A549 (cell line): ENCODE measurements at regions of chr1 and their contacts with region 1.

Region 1: DNA sequence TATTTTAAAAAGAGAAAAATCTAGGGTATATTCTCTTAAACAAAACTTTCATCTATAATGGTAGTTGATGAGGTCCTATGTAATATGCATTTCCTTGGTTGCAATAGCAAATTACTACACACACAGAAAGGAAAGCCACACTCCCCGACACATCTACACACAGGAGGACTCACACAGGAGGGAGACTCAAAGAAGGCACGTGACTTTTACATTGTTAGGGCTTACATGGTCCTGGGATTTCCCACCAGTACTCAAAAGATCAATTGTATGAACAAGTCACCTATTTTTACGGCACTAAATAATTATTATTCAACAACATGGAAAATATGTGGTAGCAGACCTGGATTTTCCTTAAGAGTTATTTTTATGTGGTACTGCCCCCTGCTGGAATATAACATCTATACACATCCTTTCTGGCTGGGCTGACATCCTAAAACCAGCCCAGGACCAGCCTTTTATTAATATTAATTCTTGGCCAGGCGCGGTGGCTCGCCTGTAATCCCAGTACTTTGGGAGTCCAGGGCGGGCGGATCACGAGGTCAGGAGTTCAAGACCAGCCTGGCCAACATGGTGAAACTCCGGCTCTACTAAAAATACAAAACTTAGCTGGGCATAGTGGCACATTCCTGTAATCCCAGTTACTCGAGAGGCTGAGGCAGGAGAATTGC is 33.9 kb upstream of the LGALS8 start:
- DNase-seq: peak; percentile 76 to 80
- ATAC-seq: peak; percentile 86 to 89
- H3K4me3 ChIP-seq: no peak overlapping the region
- H3K27ac ChIP-seq: no peak overlapping the region
- H3K4me1 ChIP-seq: 0 out of 3 replicates have a peak, but pooled peaks cover 4% of the 10 kb centered on the region
- CTCF ChIP-seq: peak; percentile 76
- EP300 ChIP-seq: no peak
- POLR2A ChIP-seq: no peak
- RAD21 ChIP-seq: peak; percentile 82 to 88

Region 2: DNA sequence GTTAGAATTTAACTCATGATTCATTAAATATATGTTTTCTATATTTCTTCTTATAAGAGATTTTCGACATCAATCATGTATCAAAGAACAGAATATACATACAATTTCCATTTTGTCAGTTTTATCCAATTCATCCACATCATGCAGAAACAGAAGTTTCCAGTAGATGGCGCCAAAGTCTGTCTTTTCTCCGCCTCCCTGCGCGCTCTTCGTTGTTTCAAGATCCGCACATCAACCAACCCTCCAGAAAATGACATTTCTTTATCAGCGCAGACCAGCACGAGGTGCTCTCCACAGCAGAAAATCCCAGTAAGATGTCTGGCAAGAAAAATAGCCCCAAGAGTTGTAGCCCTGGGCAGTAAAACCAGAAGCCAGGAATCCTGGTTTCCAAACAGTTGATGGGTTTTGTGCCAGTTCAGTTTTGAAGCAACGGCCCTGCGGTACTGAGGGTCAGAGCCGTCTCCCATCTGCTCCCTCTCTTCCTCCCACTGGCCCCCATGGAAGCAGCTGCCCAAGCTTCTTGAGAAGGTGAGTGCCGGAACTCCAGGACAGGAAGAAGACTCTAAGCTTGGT is 386.1 kb before region 1 on chr1:
- CTCF ChIA-PET with region 1: interaction called, 110 read pairs
- POLR2A ChIA-PET with region 1: no interaction called
- DNase-seq: peak; percentile 58 to 85
- ATAC-seq: peak; percentile 50 to 78; a peak in 5 of 6 replicates
- H3K4me3 ChIP-seq: no peak overlapping the region
- H3K27ac ChIP-seq: no peak overlapping the region
- H3K4me1 ChIP-seq: no peaks in the 10 kb centered on the region
- CTCF ChIP-seq: peak; percentile 95
- EP300 ChIP-seq: no peak
- POLR2A ChIP-seq: no peak
- RAD21 ChIP-seq: peak; percentile 94 to 96

Region 3: DNA sequence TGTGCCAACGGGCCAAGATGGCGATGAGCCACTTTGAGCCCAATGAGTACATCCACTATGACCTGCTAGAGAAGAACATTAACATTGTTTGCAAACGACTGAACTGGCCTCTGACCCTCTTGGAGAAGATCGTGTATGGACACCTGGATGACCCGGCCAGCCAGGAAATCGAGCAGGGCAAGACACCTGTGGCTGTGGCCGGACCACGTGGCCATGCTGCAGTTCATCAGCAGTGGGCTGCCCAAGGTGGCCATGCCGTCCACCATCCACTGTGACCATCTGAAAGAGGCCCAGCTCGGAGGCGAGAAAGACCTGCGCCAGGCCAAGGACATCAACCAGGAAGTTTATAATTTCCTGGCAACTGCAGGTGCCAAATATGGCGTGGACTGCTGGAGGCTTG is 379.7 kb before region 1 on chr1:
- CTCF ChIA-PET with region 1: interaction called, 110 read pairs
- POLR2A ChIA-PET with region 1: no interaction called
- DNase-seq: no peak
- ATAC-seq: no peak
- H3K4me3 ChIP-seq: no peak overlapping the region
- H3K27ac ChIP-seq: no peak overlapping the region
- H3K4me1 ChIP-seq: no peaks in the 10 kb centered on the region
- CTCF ChIP-seq: no peak
- EP300 ChIP-seq: no peak
- POLR2A ChIP-seq: no peak
- RAD21 ChIP-seq: no peak

Region 4: DNA sequence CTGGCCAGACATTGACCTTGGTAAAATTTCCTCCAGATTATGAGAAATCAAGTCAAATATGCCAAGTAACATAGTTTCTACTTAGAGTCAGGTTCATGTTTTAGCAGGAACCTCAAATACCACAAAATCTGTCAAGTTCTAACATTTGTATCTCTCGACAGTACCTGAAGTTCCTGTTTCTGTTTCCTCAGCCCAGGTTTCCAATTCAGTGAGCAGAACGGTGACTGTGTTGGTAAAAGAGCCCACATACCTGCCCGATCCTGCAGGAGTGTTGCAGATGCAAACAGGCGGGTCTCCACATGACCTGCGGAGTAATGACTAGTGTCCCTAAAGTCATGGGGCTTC is 23.9 kb before region 1 on chr1:
- CTCF ChIA-PET with region 1: no interaction called
- POLR2A ChIA-PET with region 1: no interaction called
- DNase-seq: no peak
- ATAC-seq: no peak
- H3K4me3 ChIP-seq: no peak overlapping the region
- H3K27ac ChIP-seq: no peak overlapping the region
- H3K4me1 ChIP-seq: peaks cover 4% of the 10 kb centered on the region; the same call in 1 of the 3 replicates
- CTCF ChIP-seq: no peak
- EP300 ChIP-seq: no peak
- POLR2A ChIP-seq: no peak
- RAD21 ChIP-seq: no peak